HCT116 (cell line): ENCODE measurements at regions of chr17 and their contacts with region 1.

Region 1: DNA sequence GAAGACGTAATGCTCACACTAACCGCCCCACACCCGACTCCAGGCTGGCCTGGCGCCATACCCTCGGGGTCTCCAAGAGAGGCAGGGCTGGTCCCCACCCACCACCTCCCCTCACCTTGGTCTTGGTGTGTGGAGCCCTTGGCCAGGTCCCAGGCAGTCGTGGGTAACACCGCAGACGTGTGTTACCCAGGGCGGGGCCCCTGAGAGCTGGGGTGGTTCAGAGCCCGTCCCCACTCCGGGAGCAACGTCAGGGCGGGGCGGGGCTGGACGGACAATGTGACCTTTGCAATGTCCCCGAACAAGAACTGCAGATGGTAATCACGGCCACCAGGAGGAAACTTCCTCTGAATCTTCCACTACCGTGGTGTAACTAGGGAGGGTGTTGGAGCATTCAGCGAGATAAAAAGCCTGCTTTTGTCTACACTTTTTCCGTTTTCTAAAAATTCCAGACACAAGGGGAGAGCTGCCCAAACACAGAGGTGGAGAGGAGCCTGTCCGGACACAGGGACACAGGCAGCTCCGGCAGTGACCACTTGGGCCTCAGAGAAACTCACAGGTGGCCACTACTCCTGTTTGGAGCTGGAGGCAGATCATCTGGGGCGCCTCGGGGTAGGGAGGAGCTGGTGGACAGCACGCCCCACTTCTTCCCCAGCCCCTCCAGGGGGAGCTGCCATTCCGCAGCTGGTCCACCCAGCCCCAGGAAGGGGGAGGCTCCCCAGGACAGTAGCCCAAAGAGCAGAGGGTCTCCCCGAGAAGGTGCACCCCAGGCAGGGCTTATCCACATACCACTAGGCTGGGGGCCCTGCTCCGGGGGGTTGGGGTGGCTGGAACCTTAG is 14.2 kb upstream of the SLC38A10 start:
- DNase-seq: peak; percentile 85
- ATAC-seq: peak; percentile 95
- H3K4me3 ChIP-seq: peak overlapping the region; percentile 69 to 78
- H3K27ac ChIP-seq: peak overlapping the region; percentile 88
- H3K4me1 ChIP-seq: peaks cover 33 to 37% of the 10 kb centered on the region in 2 experiments
- H3K27me3 ChIP-seq: no peaks in the 10 kb centered on the region
- CTCF ChIP-seq: peak in 2 of 3 experiments; percentile 69 to 77; a peak in 4 of 6 replicates
- POLR2A ChIP-seq: peak; percentile 77
- RAD21 ChIP-seq: peak; percentile 58

Region 2: GRCh38 chr17:80949451-80950421 is 359.6 kb before region 1 on chr17:
- CTCF ChIA-PET with region 1: no interaction called
- POLR2A ChIA-PET with region 1: no interaction called
- RAD21 ChIA-PET with region 1: no interaction called
- intact Hi-C with region 1: no loop called
- DNase-seq: no peak
- ATAC-seq: peak; percentile 54; the same call in 1 of the 2 replicates
- H3K4me3 ChIP-seq: no peak overlapping the region
- H3K27ac ChIP-seq: no peak overlapping the region
- H3K4me1 ChIP-seq: no peaks in the 10 kb centered on the region
- H3K27me3 ChIP-seq: no peaks in the 10 kb centered on the region
- CTCF ChIP-seq: no peak; a peak in 1 of 6 replicates
- POLR2A ChIP-seq: no peak
- RAD21 ChIP-seq: no peak

Region 3: DNA sequence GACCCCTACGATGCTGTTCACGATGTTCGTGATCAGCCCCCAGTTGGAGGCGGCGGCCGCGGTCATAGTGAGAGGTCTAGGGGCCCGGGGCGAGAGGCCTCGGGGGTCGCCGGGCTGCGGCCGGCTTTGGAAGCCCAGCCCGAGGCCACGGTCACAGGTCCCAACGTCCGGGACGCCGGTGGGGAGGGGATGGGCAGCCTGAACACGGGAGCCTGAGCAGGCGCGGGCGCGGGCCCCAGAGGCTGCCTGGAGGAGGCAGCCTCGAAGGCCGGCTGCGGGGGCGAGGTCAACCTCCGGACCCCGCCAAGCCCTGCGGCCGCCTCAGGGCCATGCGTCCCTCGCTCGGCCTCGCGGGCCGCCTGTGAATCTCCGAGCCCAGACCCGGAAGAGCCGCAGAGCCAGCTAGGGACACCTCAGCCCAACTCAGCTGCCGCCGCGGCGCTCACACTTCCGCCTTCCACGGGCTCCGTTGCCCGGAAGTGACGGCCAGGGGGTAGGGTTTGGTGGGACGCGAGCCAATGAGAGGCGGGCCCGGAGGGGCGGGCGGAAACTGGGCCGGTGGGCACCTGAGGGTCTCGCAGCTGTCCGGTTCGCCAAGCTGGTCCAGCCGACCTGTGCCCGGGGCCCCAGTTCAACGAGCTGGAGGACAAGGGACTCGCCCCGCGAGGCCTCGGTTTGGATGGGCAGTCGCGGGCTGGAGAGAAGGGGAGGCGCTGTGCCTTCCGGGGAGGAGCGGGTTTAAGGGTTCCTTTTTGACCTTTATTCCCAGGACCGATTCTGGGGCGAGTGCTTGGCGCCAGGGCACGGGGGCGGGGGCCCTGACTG is 14.2 kb before region 1 on chr17 and contains the start of gene SLC38A10:
- CTCF ChIA-PET with region 1: interaction called, 10 read pairs
- POLR2A ChIA-PET with region 1: interaction called, 7 read pairs
- RAD21 ChIA-PET with region 1: interaction called in 1 of 2 experiments, 3 read pairs
- intact Hi-C with region 1: no loop called
- DNase-seq: peak; percentile 73
- ATAC-seq: peak; percentile 81
- H3K4me3 ChIP-seq: peak within 1 kb of the TSS; percentile 78 to 82
- H3K27ac ChIP-seq: peak within 1 kb of the TSS; percentile 98
- H3K4me1 ChIP-seq: peaks cover 17 to 37% of the 10 kb centered on the region in 2 experiments; a peak in 3 of 4 replicates
- H3K27me3 ChIP-seq: no peaks in the 10 kb centered on the region
- CTCF ChIP-seq: no peak; a peak in 1 of 6 replicates
- POLR2A ChIP-seq: peak; percentile 87
- RAD21 ChIP-seq: no peak
- total RNA-seq, gene SLC38A10: 109 TPM

Region 4: DNA sequence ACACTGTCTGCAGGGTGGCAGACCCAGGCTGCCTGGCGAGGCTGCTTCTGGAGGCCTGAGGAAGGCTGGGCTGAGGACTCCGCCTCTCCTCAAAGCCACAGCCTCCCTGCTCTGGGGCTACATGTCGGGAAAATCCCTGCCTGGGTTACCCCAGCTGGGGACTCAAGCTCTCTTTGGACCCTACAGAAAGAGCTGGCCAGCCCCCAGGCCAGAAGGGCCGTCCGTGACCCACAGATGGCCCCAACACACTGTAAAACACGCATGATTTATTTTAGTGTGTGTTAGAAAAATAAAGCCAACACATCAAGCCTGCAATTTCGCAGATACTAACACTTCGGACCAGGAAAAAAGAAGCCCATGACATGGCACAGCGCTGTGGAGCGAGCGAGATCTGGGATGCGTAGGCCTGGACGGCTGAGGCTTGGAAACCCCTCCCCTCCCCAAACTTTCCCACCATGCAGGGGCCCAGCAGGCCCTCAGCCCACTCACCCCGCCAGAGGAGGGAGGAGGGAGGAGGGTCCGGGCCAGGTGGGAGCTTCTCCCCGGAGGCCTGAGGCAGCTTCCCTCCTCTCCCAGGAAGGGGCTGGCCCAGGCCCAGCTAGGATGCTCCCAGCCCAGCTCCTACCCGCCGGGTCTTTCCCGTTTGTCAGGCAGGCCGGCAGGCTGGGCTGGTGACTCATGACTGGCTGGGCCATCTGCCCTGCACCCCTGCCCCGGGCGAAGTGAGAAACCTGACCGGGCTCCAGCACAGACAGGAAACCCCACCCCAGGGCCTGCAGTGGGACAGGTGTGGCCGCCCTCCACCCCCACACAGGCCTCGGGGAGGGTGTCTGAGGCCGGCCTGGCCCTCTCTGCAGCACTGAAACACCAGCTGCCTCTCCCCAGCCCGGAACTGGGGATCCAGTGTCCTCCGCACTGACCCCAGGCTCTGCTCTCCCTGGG is 20.0 kb after region 1 on chr17:
- CTCF ChIA-PET with region 1: interaction called, 7 read pairs
- POLR2A ChIA-PET with region 1: interaction called, 11 read pairs
- RAD21 ChIA-PET with region 1: interaction called in 1 of 2 experiments, 6 read pairs
- intact Hi-C with region 1: no loop called
- DNase-seq: peak; percentile 91
- ATAC-seq: peak; percentile 86
- H3K4me3 ChIP-seq: peak overlapping the region; percentile 48 to 55
- H3K27ac ChIP-seq: peak overlapping the region; percentile 88
- H3K4me1 ChIP-seq: peaks cover 45 to 53% of the 10 kb centered on the region in 2 experiments
- H3K27me3 ChIP-seq: no peaks in the 10 kb centered on the region
- CTCF ChIP-seq: no peak
- POLR2A ChIP-seq: peak; percentile 71
- RAD21 ChIP-seq: no peak

Region 5: GRCh38 chr17:81448950-81449349 is 139.7 kb after region 1 on chr17:
- CTCF ChIA-PET with region 1: no interaction called
- POLR2A ChIA-PET with region 1: no interaction called
- RAD21 ChIA-PET with region 1: no interaction called
- intact Hi-C with region 1: no loop called
- DNase-seq: no peak
- ATAC-seq: no peak
- H3K4me3 ChIP-seq: no peak overlapping the region
- H3K27ac ChIP-seq: no peak overlapping the region
- H3K4me1 ChIP-seq: peaks cover 0 to 9% of the 10 kb centered on the region in 2 experiments; a peak in 2 of 4 replicates
- H3K27me3 ChIP-seq: no peaks in the 10 kb centered on the region
- CTCF ChIP-seq: no peak
- POLR2A ChIP-seq: no peak
- RAD21 ChIP-seq: no peak